Endothelial cell of umbilical vein (primary cell): ENCODE measurements at regions of chrX and their contacts with region 1.

Region 1: DNA sequence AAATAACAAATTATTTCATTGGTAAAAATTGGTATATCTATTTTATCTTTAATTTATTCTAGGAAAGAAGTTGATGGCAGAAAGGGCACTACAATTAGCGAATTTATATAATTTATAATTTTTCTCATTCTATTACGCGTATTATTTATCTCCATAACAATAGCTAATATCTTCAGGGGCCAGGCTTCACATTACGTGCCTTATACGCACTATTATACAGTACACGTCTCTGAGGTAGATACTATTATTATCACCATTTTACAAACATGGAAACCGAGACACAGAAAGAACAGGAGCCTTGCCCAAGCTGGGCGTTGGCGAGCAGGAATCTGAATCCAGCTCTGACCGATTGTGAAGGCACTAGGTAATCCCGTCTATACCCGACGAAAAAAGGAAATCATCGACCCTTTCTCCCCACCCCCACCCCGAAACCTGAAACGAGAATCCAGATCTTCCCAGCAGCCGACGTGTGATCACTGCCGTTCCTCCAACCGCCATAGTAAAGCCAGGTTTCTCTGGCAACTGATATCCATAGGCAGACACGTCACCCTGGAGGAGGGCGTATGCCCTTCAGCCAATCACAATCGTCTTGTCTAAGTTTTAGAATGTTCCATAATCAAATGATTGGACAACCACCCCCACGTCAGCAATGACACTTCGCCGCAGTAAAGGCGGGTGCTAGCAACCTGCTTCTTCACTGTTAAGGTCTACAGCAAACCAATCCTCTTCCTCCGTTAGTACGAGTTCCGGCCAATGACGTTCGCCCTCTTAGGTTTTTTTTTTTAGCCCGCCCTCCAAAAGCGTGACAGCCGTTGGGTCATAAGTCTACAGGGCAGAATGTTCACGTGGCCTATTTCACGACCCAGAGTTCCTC is at the start of gene MORF4L2:
- DNase-seq: peak; percentile 98
- H3K4me3 ChIP-seq: peak within 1 kb of the TSS; percentile 76 to 100 (median 85)
- H3K27ac ChIP-seq: peak within 1 kb of the TSS; percentile 98
- H3K4me1 ChIP-seq: peaks cover 20% of the 10 kb centered on the region
- H3K27me3 ChIP-seq: no peaks in the 10 kb centered on the region
- CTCF ChIP-seq: no peak
- POLR2A ChIP-seq: peak; percentile 95
- total RNA-seq, gene MORF4L2: 414 and 445 TPM in 2 replicates

Region 2: GRCh38 chrX:103533511-103534216 is 152.8 kb before region 1 on chrX:
- CTCF ChIA-PET with region 1: interaction called, 7 read pairs
- POLR2A ChIA-PET with region 1: no interaction called
- dilution Hi-C with region 1: no loop called
- intact Hi-C with region 1: loop called (anchors 1 kb)
- DNase-seq: peak; percentile 69
- H3K4me3 ChIP-seq: peak overlapping the region in 1 of 3 experiments; percentile 5
- H3K27ac ChIP-seq: no peak overlapping the region
- H3K4me1 ChIP-seq: no peaks in the 10 kb centered on the region
- H3K27me3 ChIP-seq: no peaks in the 10 kb centered on the region
- CTCF ChIP-seq: peak; percentile 61 to 62
- POLR2A ChIP-seq: no peak

Region 3: DNA sequence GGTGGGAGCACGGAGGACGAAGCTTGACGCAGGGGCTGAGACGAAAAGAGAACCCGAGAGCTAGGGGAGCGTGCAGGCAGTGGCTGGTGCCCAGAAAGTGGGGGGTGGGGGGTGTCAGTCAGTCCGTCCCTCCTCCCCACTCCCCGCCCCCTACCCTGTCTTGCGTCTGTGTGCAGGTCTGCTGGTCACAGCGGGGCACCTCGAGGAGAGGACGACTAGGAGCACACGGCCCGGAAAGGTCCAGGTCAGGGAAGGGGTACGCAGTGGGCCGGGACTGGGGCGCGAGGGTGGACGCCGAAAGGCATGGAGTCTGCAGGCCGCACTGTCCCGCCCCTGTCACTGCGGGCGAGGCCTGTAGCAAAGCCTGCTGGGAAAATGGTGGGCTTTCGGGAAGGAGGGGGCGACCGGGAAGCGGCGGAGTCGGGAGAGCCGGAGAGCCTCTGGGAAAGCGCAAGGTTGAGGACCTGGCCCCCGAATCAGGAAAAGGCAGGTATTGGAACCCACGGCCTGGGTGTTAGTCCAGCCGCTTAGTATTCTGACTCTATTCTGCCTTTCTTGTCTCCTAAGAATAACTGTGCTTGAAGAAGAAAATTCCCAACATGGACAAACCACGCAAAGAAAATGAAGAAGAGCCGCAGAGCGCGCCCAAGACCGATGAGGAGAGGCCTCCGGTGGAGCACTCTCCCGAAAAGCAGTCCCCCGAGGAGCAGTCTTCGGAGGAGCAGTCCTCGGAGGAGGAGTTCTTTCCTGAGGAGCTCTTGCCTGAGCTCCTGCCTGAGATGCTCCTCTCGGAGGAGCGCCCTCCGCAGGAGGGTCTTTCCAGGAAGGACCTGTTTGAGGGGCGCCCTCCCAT is 56.9 kb before region 1 on chrX:
- CTCF ChIA-PET with region 1: interaction called, 6 read pairs
- POLR2A ChIA-PET with region 1: interaction called, 3 read pairs
- dilution Hi-C with region 1: no loop called
- intact Hi-C with region 1: loop called (anchors 1 kb)
- DNase-seq: peak; percentile 78
- H3K4me3 ChIP-seq: peak overlapping the region; percentile 32 to 88 (median 80)
- H3K27ac ChIP-seq: peak overlapping the region; percentile 78
- H3K4me1 ChIP-seq: peaks cover 23% of the 10 kb centered on the region
- H3K27me3 ChIP-seq: no peaks in the 10 kb centered on the region
- CTCF ChIP-seq: peak; percentile 44 to 64
- POLR2A ChIP-seq: peak; percentile 82

Region 4: GRCh38 chrX:103817502-103817901 is 131.1 kb after region 1 on chrX:
- CTCF ChIA-PET with region 1: no interaction called
- POLR2A ChIA-PET with region 1: no interaction called
- dilution Hi-C with region 1: no loop called
- intact Hi-C with region 1: loop called (anchors 1 kb)
- DNase-seq: peak; percentile 53
- H3K4me3 ChIP-seq: no peak overlapping the region
- H3K27ac ChIP-seq: no peak overlapping the region
- H3K4me1 ChIP-seq: no peaks in the 10 kb centered on the region
- H3K27me3 ChIP-seq: no peaks in the 10 kb centered on the region
- CTCF ChIP-seq: peak in 1 of 2 donors; percentile 18
- POLR2A ChIP-seq: no peak

Region 5: GRCh38 chrX:103864886-103865534 is 178.6 kb after region 1 on chrX:
- CTCF ChIA-PET with region 1: no interaction called
- POLR2A ChIA-PET with region 1: no interaction called
- dilution Hi-C with region 1: no loop called
- intact Hi-C with region 1: no loop called
- DNase-seq: no peak
- H3K4me3 ChIP-seq: no peak overlapping the region
- H3K27ac ChIP-seq: no peak overlapping the region
- H3K4me1 ChIP-seq: no peaks in the 10 kb centered on the region
- H3K27me3 ChIP-seq: no peaks in the 10 kb centered on the region
- CTCF ChIP-seq: no peak
- POLR2A ChIP-seq: no peak

Region 6: GRCh38 chrX:104113222-104113965 is 427.0 kb after region 1 on chrX:
- CTCF ChIA-PET with region 1: no interaction called
- POLR2A ChIA-PET with region 1: no interaction called
- dilution Hi-C with region 1: no loop called
- intact Hi-C with region 1: loop called (anchors 5 kb)
- DNase-seq: peak; percentile 52
- H3K4me3 ChIP-seq: peak overlapping the region; percentile 67 to 76 (median 70)
- H3K27ac ChIP-seq: peak overlapping the region; percentile 72
- H3K4me1 ChIP-seq: peaks cover 12% of the 10 kb centered on the region
- H3K27me3 ChIP-seq: no peaks in the 10 kb centered on the region
- CTCF ChIP-seq: peak; percentile 39 to 40
- POLR2A ChIP-seq: no peak